ENCODE measurements at regions of chr6 and their contacts with region 1.

Region 1: DNA sequence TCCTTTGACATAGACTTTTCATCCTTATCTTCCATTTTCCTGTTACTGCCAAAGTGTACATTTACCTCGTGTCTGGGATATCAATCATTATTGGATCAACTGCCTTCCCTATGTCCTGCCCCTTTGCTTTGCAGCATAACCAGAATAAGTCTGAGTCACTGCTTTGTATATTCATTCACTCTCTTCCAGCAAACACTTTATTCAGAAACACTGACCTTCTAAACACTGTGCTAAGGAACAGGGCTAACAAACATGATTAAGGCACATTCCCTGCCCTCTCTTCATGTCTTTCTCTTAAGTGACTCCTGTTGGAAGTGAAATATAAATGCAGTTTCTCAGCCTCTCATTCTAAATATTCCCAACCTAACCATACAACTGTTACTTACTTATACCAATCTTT is 66.9 kb downstream of the COL19A1 start:
- DNase-seq: no peak
- ATAC-seq: no peak
- H3K4me3 ChIP-seq: no peak overlapping the region
- H3K27ac ChIP-seq: no peak overlapping the region
- H3K4me1 ChIP-seq: no peaks in the 10 kb centered on the region
- H3K27me3 ChIP-seq: no peaks in the 10 kb centered on the region
- CTCF ChIP-seq: no peak
- EP300 ChIP-seq: no peak
- POLR2A ChIP-seq: no peak
- RAD21 ChIP-seq: no peak

Region 2: GRCh38 chr6:68891419-68891818 is 1041.8 kb before region 1 on chr6:
- CTCF ChIA-PET with region 1: no interaction called
- POLR2A ChIA-PET with region 1: no interaction called
- in situ Hi-C with region 1: no loop called
- intact Hi-C with region 1: loop called (anchors 5 kb)
- DNase-seq: no peak
- ATAC-seq: no peak
- H3K4me3 ChIP-seq: no peak overlapping the region
- H3K27ac ChIP-seq: no peak overlapping the region
- H3K4me1 ChIP-seq: no peaks in the 10 kb centered on the region
- H3K27me3 ChIP-seq: no peaks in the 10 kb centered on the region
- CTCF ChIP-seq: no peak
- EP300 ChIP-seq: no peak
- POLR2A ChIP-seq: no peak
- RAD21 ChIP-seq: no peak

Region 3: GRCh38 chr6:70874181-70874913 is 941.1 kb after region 1 on chr6:
- CTCF ChIA-PET with region 1: no interaction called
- POLR2A ChIA-PET with region 1: no interaction called
- in situ Hi-C with region 1: no loop called
- intact Hi-C with region 1: no loop called
- DNase-seq: no peak
- ATAC-seq: no peak; the same call in 2 of the 3 replicates
- H3K4me3 ChIP-seq: no peak overlapping the region
- H3K27ac ChIP-seq: no peak overlapping the region
- H3K4me1 ChIP-seq: no peaks in the 10 kb centered on the region
- H3K27me3 ChIP-seq: no peaks in the 10 kb centered on the region; a peak in 1 of 5 replicates
- CTCF ChIP-seq: no peak
- EP300 ChIP-seq: no peak
- POLR2A ChIP-seq: no peak
- RAD21 ChIP-seq: no peak